ENCODE measurements at regions of chr19 and their contacts with region 1.

Region 1: DNA sequence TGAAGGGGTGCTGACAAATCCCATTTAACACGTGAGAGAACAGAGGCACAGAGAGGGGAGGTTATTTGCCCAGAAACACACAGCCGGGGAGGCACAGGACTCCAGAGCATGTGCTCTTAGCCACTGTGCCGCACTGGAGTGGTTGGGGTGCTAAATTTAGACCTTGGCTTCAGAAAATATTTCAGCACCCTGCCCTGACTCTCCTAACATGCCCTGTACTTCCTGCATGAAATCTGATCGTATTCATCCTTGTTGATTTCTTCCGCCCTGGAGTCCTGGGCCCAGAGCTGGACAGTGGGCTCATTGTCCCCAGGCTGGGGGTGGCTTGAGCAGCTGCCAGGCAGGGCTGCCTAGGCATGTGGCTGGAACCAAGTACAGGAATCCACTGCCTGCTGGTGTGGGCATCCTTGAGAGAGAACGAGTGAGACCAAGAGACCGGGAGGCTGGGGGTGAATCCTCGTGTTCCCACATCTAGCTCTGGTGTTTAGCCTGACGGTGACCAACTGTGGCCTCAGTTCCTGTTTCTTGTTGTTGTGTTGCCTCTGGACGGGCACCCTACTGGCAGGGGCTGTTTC is 5.3 kb downstream of the SLC27A1 start:
- DNase-seq: no peak
- H3K4me3 ChIP-seq: no peak overlapping the region
- H3K27ac ChIP-seq: no peak overlapping the region
- H3K4me1 ChIP-seq: peaks cover 7% of the 10 kb centered on the region
- CTCF ChIP-seq: no peak

Region 2: GRCh38 chr19:17555480-17555928 is 79.9 kb after region 1 on chr19 and contains the start of gene COLGALT1:
- CTCF ChIA-PET with region 1: no interaction called
- POLR2A ChIA-PET with region 1: interaction called, 10 read pairs
- intact Hi-C with region 1: no loop called
- DNase-seq: peak; percentile 100
- H3K4me3 ChIP-seq: peak within 1 kb of the TSS; percentile 88
- H3K27ac ChIP-seq: peak within 1 kb of the TSS; percentile 44
- H3K4me1 ChIP-seq: peaks cover 14% of the 10 kb centered on the region
- CTCF ChIP-seq: no peak
- total RNA-seq, gene COLGALT1: 43.0 and 49.6 TPM in 2 replicates

Measured in OCI-LY7 (cell line).